ENCODE measurements at regions of chr3 and their contacts with region 1.

Region 1: DNA sequence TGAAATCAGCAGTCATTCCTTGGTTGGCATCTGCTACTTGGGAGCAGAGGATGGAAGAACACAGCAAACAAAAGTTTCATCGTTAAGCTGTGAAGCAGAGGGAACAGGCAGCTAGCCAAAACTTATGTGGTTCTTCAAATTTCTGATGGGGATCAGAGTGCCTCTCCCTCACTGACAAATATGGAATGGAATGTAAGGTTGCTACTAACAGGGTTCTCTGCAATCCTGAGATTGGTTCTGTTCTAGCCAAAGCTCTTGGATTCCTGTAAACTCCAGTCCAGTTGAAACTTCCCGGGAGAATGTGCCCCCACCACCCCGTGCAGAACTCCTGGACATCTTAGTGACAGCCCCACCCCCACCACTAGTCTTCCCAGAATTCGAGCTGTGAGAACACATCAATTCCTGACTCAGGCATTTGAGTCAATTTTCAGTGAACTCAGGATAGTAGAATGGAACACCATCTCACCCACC is 55.9 kb upstream of the PHLDB2 start:
- DNase-seq: peak; percentile 97
- H3K4me3 Mint-ChIP-seq: peak overlapping the region; percentile 58
- H3K27ac Mint-ChIP-seq: peak overlapping the region; percentile 99
- H3K4me1 Mint-ChIP-seq: peaks cover 46% of the 10 kb centered on the region
- H3K27me3 Mint-ChIP-seq: no peaks in the 10 kb centered on the region
- CTCF ChIP-seq: no peak

Region 2: DNA sequence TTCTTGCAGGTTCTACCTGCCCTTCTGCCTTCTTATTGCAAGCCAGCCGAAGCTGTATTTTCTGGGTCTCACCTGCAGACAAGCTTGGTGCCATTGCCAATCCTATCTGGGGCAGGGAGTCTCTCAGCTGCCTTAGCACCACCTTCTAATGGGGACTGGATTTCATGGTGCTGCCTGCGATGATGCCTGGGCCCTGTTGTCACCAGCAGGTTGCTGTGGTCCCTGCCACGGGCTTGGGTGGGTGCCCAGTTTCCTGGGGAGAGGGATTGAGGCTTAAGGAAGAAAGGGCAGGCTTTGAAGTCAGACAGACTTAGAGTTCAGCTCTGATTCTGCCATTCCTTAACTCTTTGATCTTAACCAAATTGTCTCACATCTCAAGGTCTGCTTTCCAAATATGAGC is 348.6 kb before region 1 on chr3:
- CTCF ChIA-PET with region 1: no interaction called
- POLR2A ChIA-PET with region 1: no interaction called
- intact Hi-C with region 1: no loop called
- DNase-seq: no peak
- H3K4me3 Mint-ChIP-seq: no peak overlapping the region
- H3K27ac Mint-ChIP-seq: no peak overlapping the region
- H3K4me1 Mint-ChIP-seq: no peaks in the 10 kb centered on the region
- H3K27me3 Mint-ChIP-seq: no peaks in the 10 kb centered on the region
- CTCF ChIP-seq: no peak

Region 3: GRCh38 chr3:111577794-111578685 is 225.1 kb before region 1 on chr3:
- CTCF ChIA-PET with region 1: no interaction called
- POLR2A ChIA-PET with region 1: no interaction called
- intact Hi-C with region 1: loop called (anchors 5 kb)
- DNase-seq: peak; percentile 81
- H3K4me3 Mint-ChIP-seq: no peak overlapping the region
- H3K27ac Mint-ChIP-seq: no peak overlapping the region
- H3K4me1 Mint-ChIP-seq: peaks cover 31% of the 10 kb centered on the region
- H3K27me3 Mint-ChIP-seq: no peaks in the 10 kb centered on the region
- CTCF ChIP-seq: peak; percentile 82

Region 4: GRCh38 chr3:111729087-111729846 is 73.9 kb before region 1 on chr3:
- CTCF ChIA-PET with region 1: interaction called, 3 read pairs
- POLR2A ChIA-PET with region 1: interaction called, 26 read pairs
- intact Hi-C with region 1: no loop called
- DNase-seq: peak; percentile 79
- H3K4me3 Mint-ChIP-seq: peak overlapping the region; percentile 25
- H3K27ac Mint-ChIP-seq: peak overlapping the region; percentile 62
- H3K4me1 Mint-ChIP-seq: peaks cover 30% of the 10 kb centered on the region
- H3K27me3 Mint-ChIP-seq: no peaks in the 10 kb centered on the region
- CTCF ChIP-seq: no peak

Region 5: GRCh38 chr3:111745786-111746185 is 57.4 kb before region 1 on chr3:
- CTCF ChIA-PET with region 1: interaction called, 5 read pairs
- POLR2A ChIA-PET with region 1: interaction called, 135 read pairs
- intact Hi-C with region 1: no loop called
- DNase-seq: no peak
- H3K4me3 Mint-ChIP-seq: no peak overlapping the region
- H3K27ac Mint-ChIP-seq: peak overlapping the region; percentile 91
- H3K4me1 Mint-ChIP-seq: peaks cover 16% of the 10 kb centered on the region
- H3K27me3 Mint-ChIP-seq: no peaks in the 10 kb centered on the region
- CTCF ChIP-seq: no peak

Region 6: DNA sequence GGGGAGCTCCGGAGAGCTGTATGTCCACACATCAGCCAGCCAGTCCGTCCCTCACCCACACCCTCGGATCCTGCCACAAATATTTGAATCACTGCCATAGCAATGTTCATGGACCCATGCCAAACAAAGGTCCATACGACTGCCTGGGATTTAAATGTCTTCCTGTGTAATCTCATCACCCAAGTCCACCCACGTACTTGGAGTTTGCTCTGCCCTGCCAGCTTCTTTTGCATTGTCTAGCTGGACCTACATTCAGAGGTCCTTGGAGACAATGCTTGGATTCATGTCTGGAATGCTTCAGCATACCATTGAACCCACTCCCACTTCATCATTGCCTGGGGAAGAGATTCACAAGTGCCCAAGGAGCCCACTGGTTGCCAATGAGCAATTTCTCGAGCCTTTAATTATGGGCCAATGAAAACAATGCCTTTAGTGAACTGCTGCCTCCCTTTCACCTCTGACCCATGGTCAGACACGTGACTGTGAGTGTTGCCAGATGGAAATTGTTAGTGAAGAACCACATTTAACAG is 34.5 kb before region 1 on chr3:
- CTCF ChIA-PET with region 1: interaction called, 7 read pairs
- POLR2A ChIA-PET with region 1: interaction called, 84 read pairs
- intact Hi-C with region 1: no loop called
- DNase-seq: peak; percentile 96
- H3K4me3 Mint-ChIP-seq: no peak overlapping the region
- H3K27ac Mint-ChIP-seq: peak overlapping the region; percentile 82
- H3K4me1 Mint-ChIP-seq: peaks cover 38% of the 10 kb centered on the region
- H3K27me3 Mint-ChIP-seq: no peaks in the 10 kb centered on the region
- CTCF ChIP-seq: no peak

Region 7: GRCh38 chr3:111904376-111905241 is 101.5 kb after region 1 on chr3:
- CTCF ChIA-PET with region 1: interaction called, 3 read pairs
- POLR2A ChIA-PET with region 1: interaction called, 16 read pairs
- intact Hi-C with region 1: no loop called
- DNase-seq: peak; percentile 94
- H3K4me3 Mint-ChIP-seq: no peak overlapping the region
- H3K27ac Mint-ChIP-seq: peak overlapping the region; percentile 81
- H3K4me1 Mint-ChIP-seq: peaks cover 33% of the 10 kb centered on the region
- H3K27me3 Mint-ChIP-seq: no peaks in the 10 kb centered on the region
- CTCF ChIP-seq: peak; percentile 23

Region 8: GRCh38 chr3:112032098-112032731 is 229.1 kb after region 1 on chr3:
- CTCF ChIA-PET with region 1: no interaction called
- POLR2A ChIA-PET with region 1: no interaction called
- intact Hi-C with region 1: no loop called
- DNase-seq: no peak
- H3K4me3 Mint-ChIP-seq: no peak overlapping the region
- H3K27ac Mint-ChIP-seq: no peak overlapping the region
- H3K4me1 Mint-ChIP-seq: no peaks in the 10 kb centered on the region
- H3K27me3 Mint-ChIP-seq: no peaks in the 10 kb centered on the region
- CTCF ChIP-seq: no peak

Region 9: GRCh38 chr3:112647122-112647521 is 844.0 kb after region 1 on chr3:
- CTCF ChIA-PET with region 1: no interaction called
- POLR2A ChIA-PET with region 1: no interaction called
- intact Hi-C with region 1: no loop called
- DNase-seq: peak; percentile 80
- H3K4me3 Mint-ChIP-seq: no peak overlapping the region
- H3K27ac Mint-ChIP-seq: peak overlapping the region; percentile 5
- H3K4me1 Mint-ChIP-seq: peaks cover 48% of the 10 kb centered on the region
- H3K27me3 Mint-ChIP-seq: no peaks in the 10 kb centered on the region
- CTCF ChIP-seq: no peak

Measured in MCF 10A (cell line).